Activated CD8-positive, alpha-beta memory T cell treated with anti-CD3 and anti-CD28 coated beads, Interleukin-2, amount 10 ng/mL, durations not matched to agents 7 days and 5 days (primary cell): ENCODE measurements at regions of chr4 and their contacts with region 1.

Region 1: GRCh38 chr4:48085821-48086607 is 48.0 kb downstream of the TXK start:
- DNase-seq: no peak
- ATAC-seq: no peak
- H3K4me3 Mint-ChIP-seq: no peak overlapping the region
- H3K27ac Mint-ChIP-seq: no peak overlapping the region
- H3K4me1 Mint-ChIP-seq: no peaks in the 10 kb centered on the region
- H3K27me3 Mint-ChIP-seq: no peaks in the 10 kb centered on the region

Region 2: DNA sequence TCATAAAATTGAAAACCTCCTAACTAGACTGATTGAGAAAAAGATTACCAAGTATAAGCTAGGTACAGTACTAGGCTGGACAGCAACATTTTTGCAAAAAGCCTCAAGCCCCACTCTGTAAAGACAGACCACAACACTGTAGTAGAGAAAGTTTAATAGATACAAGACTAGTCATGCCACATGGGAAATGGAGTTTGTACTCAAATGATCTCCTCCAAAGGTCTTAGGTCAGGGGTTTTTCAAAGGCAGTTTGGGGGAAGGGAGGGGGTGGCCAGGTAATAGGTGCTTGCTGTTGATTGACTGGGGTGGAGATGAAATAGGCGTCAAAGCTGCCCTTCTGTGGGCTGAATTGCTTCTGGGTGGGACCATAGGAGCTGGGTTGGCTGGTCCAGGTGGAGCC is 83.7 kb before region 1 on chr4:
- CTCF ChIA-PET with region 1: interaction called, 11 read pairs
- DNase-seq: no peak
- ATAC-seq: no peak
- H3K4me3 Mint-ChIP-seq: no peak overlapping the region
- H3K27ac Mint-ChIP-seq: no peak overlapping the region
- H3K4me1 Mint-ChIP-seq: no peaks in the 10 kb centered on the region
- H3K27me3 Mint-ChIP-seq: peaks cover 9% of the 10 kb centered on the region